Colonic mucosa (tissue), 4 donors: ENCODE measurements at regions of chr13 and their contacts with region 1.

Region 1: GRCh38 chr13:32594157-32594738 is 8.0 kb downstream of the PDS5B start:
- DNase-seq: no peak
- H3K4me3 ChIP-seq: no peak overlapping the region
- H3K27ac ChIP-seq: no peak overlapping the region
- H3K4me1 ChIP-seq: no peaks in the 10 kb centered on the region
- H3K27me3 ChIP-seq: no peaks in the 10 kb centered on the region
- CTCF ChIP-seq: no peak

Region 2: GRCh38 chr13:32905063-32905863 is 311.0 kb after region 1 on chr13:
- intact Hi-C with region 1: loop called (anchors 10 kb)
- DNase-seq: no peak
- H3K4me3 ChIP-seq: no peak overlapping the region
- H3K27ac ChIP-seq: no peak overlapping the region
- H3K4me1 ChIP-seq: peaks cover 3% of the 10 kb centered on the region
- H3K27me3 ChIP-seq: no peaks in the 10 kb centered on the region
- CTCF ChIP-seq: no peak